ENCODE measurements at regions of chr7 and their contacts with region 1.

Region 1: DNA sequence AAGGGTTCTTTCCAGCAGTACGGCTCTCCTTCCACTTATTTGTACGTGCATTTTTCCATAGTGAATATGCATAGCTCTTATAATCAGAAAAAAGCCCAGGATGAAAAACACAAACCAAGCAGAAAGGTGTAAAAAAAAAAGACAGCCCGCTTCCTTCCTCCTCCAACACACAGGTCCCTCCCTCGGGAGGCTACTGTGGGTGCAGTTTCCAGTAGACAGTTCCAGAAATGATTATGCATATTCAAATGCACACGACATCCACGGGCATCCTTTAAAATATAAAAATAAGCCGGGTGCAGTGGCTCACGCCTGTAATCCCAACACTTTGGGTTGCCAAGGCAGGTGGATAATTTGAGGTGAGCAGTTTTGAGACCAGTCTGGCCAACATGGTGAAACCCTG is 59.9 kb downstream of the TNRC18 start:
- DNase-seq: no peak
- ATAC-seq: no peak

Region 2: DNA sequence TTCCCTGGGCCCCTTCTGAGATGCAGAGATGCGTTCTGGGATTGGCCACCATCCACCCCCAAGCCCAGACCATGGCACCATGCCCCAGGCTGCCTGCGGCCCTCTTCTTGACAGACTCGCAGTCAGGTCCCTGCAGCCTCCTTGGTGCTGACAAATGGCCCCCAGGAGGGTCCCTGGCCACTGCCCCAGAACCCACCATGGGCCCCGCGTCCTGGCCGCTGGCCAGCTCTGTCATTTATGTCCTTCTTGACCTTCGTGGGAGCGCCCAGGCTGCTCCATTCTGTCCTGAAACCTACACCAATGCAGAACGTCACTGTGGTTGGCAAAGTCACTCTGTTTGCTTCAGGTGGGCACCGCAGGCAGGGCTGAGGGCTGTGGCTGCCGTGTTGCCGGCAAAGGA is 120.5 kb before region 1 on chr7:
- intact Hi-C with region 1: loop called (anchors 5 kb)
- DNase-seq: no peak
- ATAC-seq: no peak

Region 3: GRCh38 chr7:5423844-5424688 is 60.3 kb after region 1 on chr7:
- intact Hi-C with region 1: loop called (anchors 5 kb)
- DNase-seq: peak; percentile 96
- ATAC-seq: peak; percentile 33

Region 4: GRCh38 chr7:5450549-5451372 is 87.0 kb after region 1 on chr7:
- intact Hi-C with region 1: loop called (anchors 1 kb)
- DNase-seq: peak; percentile 76
- ATAC-seq: peak; percentile 66

Region 5: DNA sequence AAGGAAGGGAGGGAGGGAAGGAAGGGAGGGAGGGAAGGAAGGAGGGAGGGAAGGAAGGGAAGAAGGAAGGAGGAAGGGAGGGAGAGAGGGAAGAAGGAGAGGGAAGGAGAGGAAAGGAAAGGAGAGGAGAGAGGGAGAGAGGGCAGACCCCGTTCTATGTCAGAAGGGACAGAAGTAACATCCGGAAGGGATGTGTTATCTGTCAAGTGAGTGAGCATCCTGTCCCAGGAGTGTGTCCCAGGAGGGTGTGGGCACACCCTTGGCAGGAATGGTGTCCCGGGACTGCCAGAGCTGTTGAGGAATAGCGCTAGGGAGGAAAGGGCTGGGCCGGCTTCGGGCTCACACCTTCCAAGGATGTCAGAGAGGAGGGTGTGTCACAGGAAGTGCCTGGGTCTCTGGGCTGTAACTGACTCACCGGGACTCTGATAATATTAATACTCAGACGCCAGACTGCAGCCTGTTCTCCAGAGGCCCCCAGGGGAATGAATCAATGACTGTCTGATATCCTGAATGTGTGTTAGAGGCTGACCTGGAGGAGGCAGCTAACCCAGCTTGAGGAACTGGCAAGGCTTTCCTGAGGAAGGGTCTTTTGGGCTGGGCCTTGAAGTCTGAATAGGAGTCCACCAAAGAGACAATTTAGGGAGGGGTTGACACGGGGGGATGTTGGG is 185.5 kb after region 1 on chr7:
- intact Hi-C with region 1: no loop called
- DNase-seq: no peak
- ATAC-seq: no peak

Region 6: DNA sequence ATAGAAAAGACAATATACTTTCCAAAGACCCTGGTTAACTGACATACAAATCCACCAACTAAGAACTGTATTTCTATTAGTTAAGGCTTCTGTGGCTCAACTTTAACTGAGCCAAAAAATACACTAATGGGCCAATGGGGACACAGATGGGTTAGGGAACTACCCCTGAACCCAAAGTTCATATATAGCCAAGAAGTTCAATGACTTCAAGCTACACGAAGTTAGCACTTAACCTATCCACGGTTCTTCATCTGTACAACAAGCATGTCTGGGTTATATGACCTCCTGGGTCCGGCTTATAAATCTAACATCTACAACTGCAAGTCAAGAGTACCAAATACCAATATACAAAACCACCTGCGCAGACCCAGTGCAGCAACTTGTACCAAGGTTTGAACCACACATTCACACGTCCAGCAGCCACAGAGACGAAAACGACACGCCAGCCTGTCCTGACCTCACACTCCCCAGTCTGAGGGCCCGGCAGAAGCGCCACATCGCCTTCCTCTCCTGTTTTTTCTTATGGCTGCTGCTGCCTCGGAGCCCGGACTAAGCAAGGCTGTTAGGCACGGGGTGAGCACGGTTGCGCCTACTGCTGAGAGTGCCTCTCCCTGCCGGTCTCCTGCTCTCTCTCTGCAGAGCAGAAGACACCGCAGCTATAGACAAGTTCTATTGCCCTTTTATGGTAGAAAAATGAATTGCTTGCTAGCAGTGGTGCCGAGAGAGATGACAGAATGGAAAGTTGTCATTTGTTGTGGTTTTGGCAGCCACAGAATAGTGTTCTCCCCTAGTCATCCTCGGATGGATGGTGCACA is 331.4 kb after region 1 on chr7:
- intact Hi-C with region 1: loop called (anchors 10 kb)
- DNase-seq: no peak
- ATAC-seq: peak; percentile 3